ENCODE measurements at regions of chr10 and their contacts with region 1.

Region 1: DNA sequence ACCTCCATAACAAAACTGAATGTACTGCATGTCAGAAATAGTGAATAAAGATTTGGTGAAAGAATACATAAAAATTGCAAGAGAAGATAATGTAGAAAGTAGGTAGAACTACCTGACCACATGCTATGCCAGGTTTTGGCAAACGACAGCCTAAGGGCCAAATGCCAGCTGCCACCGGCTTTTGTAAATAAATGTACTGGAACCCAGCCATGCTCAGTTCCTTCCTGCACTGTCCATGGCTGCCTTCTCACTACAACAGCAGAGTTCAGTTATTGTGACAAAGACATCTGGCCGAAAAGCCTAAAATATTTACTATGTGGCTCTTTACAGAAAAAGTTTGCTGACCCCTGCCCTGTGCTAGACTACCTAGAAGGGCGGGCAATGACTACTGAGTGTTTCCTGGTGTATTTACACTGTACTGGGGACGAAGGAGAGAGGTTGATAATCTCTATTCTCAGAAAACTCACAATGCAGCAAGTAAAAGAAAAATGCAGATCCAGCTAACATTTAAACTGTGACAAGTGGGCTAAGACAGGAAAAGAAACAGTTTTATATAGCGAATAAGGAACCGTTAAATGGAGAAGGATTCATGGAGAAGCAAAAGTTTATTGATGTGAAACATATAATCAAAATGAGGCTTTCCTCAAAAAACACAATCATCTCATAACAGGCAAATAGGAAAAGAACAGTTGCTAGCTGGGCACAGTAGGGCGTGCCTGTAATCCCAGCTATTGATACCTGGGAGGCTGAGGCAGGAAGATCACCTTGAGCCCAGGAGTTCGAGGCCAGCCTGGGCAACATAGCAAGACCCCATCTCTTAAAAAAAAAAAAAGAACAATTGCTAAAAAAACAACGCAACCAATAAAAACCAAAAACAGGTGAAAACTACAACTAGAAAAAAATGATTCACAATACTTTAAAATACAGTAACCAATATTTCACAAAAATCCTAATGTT is 13.7 kb downstream of the KIN start:
- DNase-seq: no peak
- H3K4me3 ChIP-seq: no peak overlapping the region
- H3K4me3 Mint-ChIP-seq: no peak overlapping the region
- H3K27ac Mint-ChIP-seq: no peak overlapping the region
- H3K4me1 ChIP-seq: no peaks in the 10 kb centered on the region
- H3K4me1 Mint-ChIP-seq: no peaks in the 10 kb centered on the region
- H3K27me3 ChIP-seq: no peaks in the 10 kb centered on the region; the same call in 1 of the 2 replicates
- H3K27me3 Mint-ChIP-seq: no peaks in the 10 kb centered on the region
- CTCF ChIP-seq: no peak

Region 2: GRCh38 chr10:7810443-7810842 is 36.3 kb after region 1 on chr10:
- CTCF ChIA-PET with region 1: no interaction called
- POLR2A ChIA-PET with region 1: interaction called, 12 read pairs
- intact Hi-C with region 1: no loop called
- DNase-seq: no peak
- H3K4me3 ChIP-seq: no peak overlapping the region
- H3K4me3 Mint-ChIP-seq: no peak overlapping the region
- H3K27ac Mint-ChIP-seq: no peak overlapping the region
- H3K4me1 ChIP-seq: peaks cover 4% of the 10 kb centered on the region; the same call in 1 of the 2 replicates
- H3K4me1 Mint-ChIP-seq: peaks cover 6% of the 10 kb centered on the region
- H3K27me3 ChIP-seq: no peaks in the 10 kb centered on the region
- H3K27me3 Mint-ChIP-seq: no peaks in the 10 kb centered on the region
- CTCF ChIP-seq: no peak